Left colon (tissue), 2 donors: ENCODE measurements at regions of chr2 and their contacts with region 1.

Region 1: GRCh38 chr2:235746257-235747084 is 252.6 kb downstream of the AGAP1 start:
- DNase-seq: peak; percentile 48 to 49
- ATAC-seq: peak; percentile 85

Region 2: GRCh38 chr2:235135990-235136561 is 610.4 kb before region 1 on chr2:
- intact Hi-C with region 1: loop called (anchors 10 kb)
- DNase-seq: peak; percentile 79 to 91
- ATAC-seq: peak; percentile 98

Region 3: GRCh38 chr2:235577404-235578330 is 168.8 kb before region 1 on chr2:
- intact Hi-C with region 1: no loop called
- DNase-seq: no peak
- ATAC-seq: no peak

Region 4: GRCh38 chr2:235595422-235596010 is 151.0 kb before region 1 on chr2:
- intact Hi-C with region 1: loop called (anchors 5 kb)
- DNase-seq: peak; percentile 52 to 72
- ATAC-seq: peak; percentile 66

Region 5: GRCh38 chr2:235669983-235670962 is 76.2 kb before region 1 on chr2:
- intact Hi-C with region 1: loop called in 1 of 2 experiments (anchors 10 kb)
- DNase-seq: peak; percentile 64 to 70
- ATAC-seq: peak; percentile 70